PC-9 (cell line): ENCODE measurements at regions of chr11 and their contacts with region 1.

Region 1: DNA sequence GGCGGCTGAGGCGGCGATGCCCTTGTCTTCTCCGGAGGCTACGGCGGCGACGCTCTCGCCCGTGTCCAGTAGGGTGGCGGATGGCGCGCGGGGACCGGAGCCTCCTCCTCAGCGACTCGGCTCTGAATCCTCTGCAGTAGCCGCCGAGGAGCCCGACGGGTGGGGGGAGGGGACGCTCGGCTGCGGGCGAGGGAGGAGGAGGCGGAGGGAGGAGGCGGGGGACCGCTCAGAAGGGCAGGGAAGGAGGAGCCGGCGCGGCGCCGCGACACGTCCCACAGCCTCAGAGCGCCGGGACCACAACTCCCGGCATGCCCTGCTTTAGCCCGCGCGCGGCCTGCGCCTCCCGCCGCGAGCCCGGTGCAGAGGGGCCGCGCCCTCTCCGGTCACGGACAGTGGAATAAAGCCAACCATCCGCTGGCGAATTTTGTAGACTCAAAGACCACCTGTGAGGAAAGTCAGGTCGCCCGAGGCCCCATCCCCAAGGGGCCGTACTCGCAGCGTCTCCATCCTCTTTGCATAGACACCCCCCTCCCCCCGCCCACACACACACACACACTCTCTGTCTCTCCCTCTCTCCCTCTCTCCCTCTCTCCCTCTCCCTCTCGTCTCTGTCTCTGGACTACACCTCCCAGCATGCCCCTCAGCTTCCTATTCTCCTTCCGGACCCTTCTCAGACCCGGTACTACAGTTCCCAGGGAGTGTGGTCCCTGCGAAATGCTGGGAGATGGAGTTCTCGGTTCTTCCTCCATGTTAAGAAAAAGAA is at the start of gene FAM168A:
- DNase-seq: peak; percentile 88 to 94
- H3K4me3 ChIP-seq: peak within 1 kb of the TSS; percentile 86
- H3K27ac ChIP-seq: peak within 1 kb of the TSS; percentile 22; the same call in 1 of the 2 replicates
- H3K4me1 ChIP-seq: peaks cover 16% of the 10 kb centered on the region
- H3K27me3 ChIP-seq: no peaks in the 10 kb centered on the region
- CTCF ChIP-seq: no peak
- total RNA-seq, gene FAM168A: 38.6 and 51.2 TPM in 2 replicates

Region 2: DNA sequence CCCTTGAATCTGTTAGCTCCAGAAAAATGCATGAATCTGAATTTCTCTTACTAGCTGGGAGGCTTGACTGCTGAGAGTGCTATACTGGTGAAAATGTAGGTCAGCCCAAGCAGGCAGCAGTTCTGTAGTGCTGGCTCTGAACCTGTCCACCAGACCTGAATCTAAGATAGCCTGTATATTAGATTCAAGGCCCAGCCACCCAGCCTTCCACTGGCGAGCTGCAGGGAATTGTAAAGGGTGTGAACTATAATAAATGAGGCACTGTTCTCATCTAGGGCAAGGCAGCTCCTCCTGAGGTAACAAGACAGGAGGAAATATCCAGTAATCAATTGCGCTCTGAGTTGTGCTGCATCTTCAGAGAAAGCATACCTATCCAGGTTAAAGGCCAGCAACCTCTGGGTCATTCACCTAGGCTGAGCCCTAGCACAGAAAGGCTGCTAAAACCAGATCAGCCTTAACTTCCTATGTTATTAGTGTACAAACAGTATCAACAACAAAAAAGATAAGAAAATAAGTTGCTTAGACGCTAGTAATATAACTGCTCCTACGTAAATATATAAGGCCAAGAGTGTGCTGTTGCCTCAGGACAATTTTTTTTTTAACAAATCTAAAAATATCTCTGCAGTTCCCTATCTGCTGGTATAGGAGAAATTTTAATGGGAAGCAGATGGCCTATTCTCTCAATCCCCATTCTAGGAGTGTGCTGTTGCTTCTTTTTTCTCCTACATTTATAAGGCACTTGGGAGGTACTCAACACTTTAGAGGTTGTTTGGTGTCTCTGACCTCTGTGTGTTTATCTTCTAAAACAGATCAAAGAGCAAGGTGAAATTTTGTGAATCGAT is 158.9 kb before region 1 on chr11:
- CTCF ChIA-PET with region 1: no interaction called
- POLR2A ChIA-PET with region 1: interaction called, 21 read pairs
- intact Hi-C with region 1: no loop called
- DNase-seq: no peak
- H3K4me3 ChIP-seq: no peak overlapping the region
- H3K27ac ChIP-seq: no peak overlapping the region
- H3K4me1 ChIP-seq: no peaks in the 10 kb centered on the region
- H3K27me3 ChIP-seq: no peaks in the 10 kb centered on the region
- CTCF ChIP-seq: no peak

Region 3: DNA sequence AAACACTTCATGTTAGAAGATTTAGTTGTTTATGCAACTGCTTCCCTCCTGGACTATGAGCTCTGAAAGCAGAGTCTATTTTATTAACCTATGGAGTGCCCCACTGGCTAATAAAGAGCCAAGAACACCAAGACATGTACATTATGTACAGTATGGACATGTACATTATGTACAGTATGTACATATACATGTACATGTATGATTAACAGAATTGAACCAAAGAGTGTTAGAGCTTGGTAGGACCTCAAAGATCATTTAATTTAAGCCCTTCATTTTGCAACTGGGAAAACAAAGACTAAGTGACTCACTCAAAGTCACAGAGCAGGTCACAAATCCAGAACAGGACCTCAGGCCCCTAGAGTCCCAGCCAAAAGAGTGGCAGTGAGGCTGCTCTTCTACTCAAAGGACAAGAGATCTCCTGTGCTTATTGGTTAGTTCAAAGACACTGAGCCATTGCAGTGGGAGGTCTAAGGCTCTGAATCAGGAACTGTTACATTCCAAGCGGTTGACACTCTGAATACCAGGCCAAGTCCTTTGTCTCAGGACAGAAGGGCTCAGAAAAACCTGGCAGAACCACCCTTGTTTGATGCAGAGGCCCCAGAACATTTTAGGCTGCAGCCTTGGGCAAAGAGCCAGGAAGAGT is 104.1 kb before region 1 on chr11:
- CTCF ChIA-PET with region 1: no interaction called
- POLR2A ChIA-PET with region 1: interaction called, 5 read pairs
- intact Hi-C with region 1: loop called (anchors 1 kb)
- DNase-seq: peak; percentile 81 to 96
- H3K4me3 ChIP-seq: no peak overlapping the region
- H3K27ac ChIP-seq: 0 out of 2 replicates have a peak overlapping the region, but pooled peaks have one; percentile 31
- H3K4me1 ChIP-seq: peaks cover 16% of the 10 kb centered on the region
- H3K27me3 ChIP-seq: no peaks in the 10 kb centered on the region
- CTCF ChIP-seq: no peak

Region 4: GRCh38 chr11:73810637-73811036 is 212.5 kb after region 1 on chr11:
- CTCF ChIA-PET with region 1: no interaction called
- POLR2A ChIA-PET with region 1: no interaction called
- intact Hi-C with region 1: no loop called
- DNase-seq: no peak
- H3K4me3 ChIP-seq: no peak overlapping the region
- H3K27ac ChIP-seq: no peak overlapping the region
- H3K4me1 ChIP-seq: no peaks in the 10 kb centered on the region
- H3K27me3 ChIP-seq: no peaks in the 10 kb centered on the region
- CTCF ChIP-seq: no peak